WTC11 (cell line): ENCODE measurements at regions of chr3 and their contacts with region 1.

Region 1: DNA sequence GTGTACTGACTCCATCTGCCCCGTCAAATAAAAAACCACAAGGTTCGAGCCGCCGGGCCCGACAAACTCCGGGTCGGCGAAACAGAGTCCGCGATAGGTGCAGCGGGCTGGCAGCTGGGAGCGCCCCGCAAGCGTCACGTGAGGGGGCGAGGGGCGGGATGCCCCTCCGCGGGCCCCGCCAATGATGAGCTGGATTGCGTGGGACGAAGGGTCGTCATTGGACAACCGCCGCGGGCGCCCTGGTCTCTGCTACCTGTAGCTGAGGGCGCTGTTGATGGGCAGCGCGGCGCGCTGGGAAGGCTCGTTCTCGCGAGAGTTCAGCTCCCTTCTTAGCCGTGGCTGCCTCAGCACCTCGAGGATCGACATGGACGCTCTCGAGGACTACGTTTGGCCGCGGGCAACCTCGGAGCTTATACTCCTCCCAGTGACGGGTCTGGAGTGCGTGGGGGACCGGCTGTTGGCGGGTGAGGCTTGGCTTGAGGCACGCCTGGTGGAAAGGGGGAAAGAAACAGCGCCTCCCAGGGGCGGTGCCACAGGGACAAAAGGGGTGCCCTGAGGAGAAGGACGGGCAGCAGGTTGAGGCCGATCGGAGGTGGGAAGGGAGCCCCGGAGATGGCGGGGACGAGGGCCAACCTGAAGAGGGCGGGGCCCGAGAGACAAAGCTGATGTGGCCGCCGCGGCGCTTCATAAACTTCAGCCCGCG is at the start of gene WDR6:
- DNase-seq: peak; percentile 97
- ATAC-seq: peak; percentile 90
- H3K4me3 Mint-ChIP-seq: peak within 1 kb of the TSS; percentile 99
- H3K27ac Mint-ChIP-seq: peak within 1 kb of the TSS; percentile 100
- H3K4me1 Mint-ChIP-seq: peaks cover 15% of the 10 kb centered on the region
- H3K27me3 Mint-ChIP-seq: no peaks in the 10 kb centered on the region
- CTCF ChIP-seq: 0 out of 2 replicates have a peak, but pooled peaks have one; percentile 37
- total RNA-seq, gene WDR6: 204 to 213 TPM (median 209 TPM) in 3 replicates

Region 2: GRCh38 chr3:49021813-49022687 is 14.8 kb after region 1 on chr3 and contains the start of gene NDUFAF3:
- CTCF ChIA-PET with region 1: interaction called, 124 read pairs
- POLR2A ChIA-PET with region 1: interaction called, 81 read pairs
- DNase-seq: peak; percentile 97
- ATAC-seq: peak; percentile 71
- H3K4me3 Mint-ChIP-seq: peak within 1 kb of the TSS; percentile 92
- H3K27ac Mint-ChIP-seq: peak within 1 kb of the TSS; percentile 98
- H3K4me1 Mint-ChIP-seq: peaks cover 29% of the 10 kb centered on the region
- H3K27me3 Mint-ChIP-seq: no peaks in the 10 kb centered on the region
- CTCF ChIP-seq: peak; percentile 88
- total RNA-seq, gene NDUFAF3: 36.8 to 50.3 TPM (median 49.6 TPM) in 3 replicates

Region 3: DNA sequence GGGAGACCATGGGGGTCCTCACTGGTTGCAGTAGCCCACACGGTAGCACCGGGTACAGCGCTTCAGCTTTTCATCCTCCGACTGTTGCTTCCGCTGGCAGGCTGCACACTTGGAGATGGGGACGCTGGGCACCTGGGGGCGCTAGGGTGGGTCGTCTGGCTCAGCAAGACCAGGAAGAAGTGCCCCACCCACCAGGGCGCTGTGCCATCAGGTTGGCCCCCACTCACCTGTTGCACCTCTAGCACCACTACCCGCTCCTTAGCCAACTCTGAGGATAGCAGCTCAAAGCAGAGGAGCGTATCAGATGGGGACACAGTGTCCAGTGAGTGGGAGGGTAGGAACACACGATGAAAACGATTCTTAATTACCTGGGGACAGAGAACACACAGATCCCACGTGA is 105.0 kb after region 1 on chr3:
- CTCF ChIA-PET with region 1: no interaction called
- POLR2A ChIA-PET with region 1: no interaction called
- DNase-seq: no peak
- ATAC-seq: peak; percentile 30; the same call in 1 of the 2 replicates
- H3K4me3 Mint-ChIP-seq: no peak overlapping the region
- H3K27ac Mint-ChIP-seq: no peak overlapping the region
- H3K4me1 Mint-ChIP-seq: no peaks in the 10 kb centered on the region
- H3K27me3 Mint-ChIP-seq: no peaks in the 10 kb centered on the region
- CTCF ChIP-seq: no peak